Testis (tissue), 5 donors: ENCODE measurements at regions of chr1 and their contacts with region 1.

Region 1: GRCh38 chr1:3012456-3013291 is 8.6 kb upstream of the ACTRT2 start:
- DNase-seq: peak; percentile 74
- H3K4me3 ChIP-seq: peak overlapping the region in 1 of 2 donors; percentile 30
- H3K27ac ChIP-seq: no peak overlapping the region
- H3K4me1 ChIP-seq: peaks cover 9% of the 10 kb centered on the region
- H3K27me3 ChIP-seq: no peaks in the 10 kb centered on the region
- CTCF ChIP-seq: peak in 2 of 3 experiments; percentile 48 to 98
- POLR2A ChIP-seq: no peak

Region 2: GRCh38 chr1:3423245-3423829 is 410.7 kb after region 1 on chr1:
- intact Hi-C with region 1: loop called (anchors 5 kb)
- DNase-seq: peak; percentile 66
- H3K4me3 ChIP-seq: no peak overlapping the region
- H3K27ac ChIP-seq: no peak overlapping the region
- H3K4me1 ChIP-seq: peaks cover 11% of the 10 kb centered on the region
- H3K27me3 ChIP-seq: no peaks in the 10 kb centered on the region
- CTCF ChIP-seq: no peak
- POLR2A ChIP-seq: no peak